Heart right ventricle (tissue), 16 donors: ENCODE measurements at regions of chr1 and their contacts with region 1.

Region 1: GRCh38 chr1:169809370-169810095 is 14.8 kb upstream of the METTL18 start:
- DNase-seq: peak in 1 of 2 donors; percentile 33
- ATAC-seq: no peak
- H3K4me3 ChIP-seq: no peak overlapping the region
- H3K27ac ChIP-seq: no peak overlapping the region
- H3K4me1 ChIP-seq: no peaks in the 10 kb centered on the region
- H3K27me3 ChIP-seq: no peaks in the 10 kb centered on the region
- CTCF ChIP-seq: peak; percentile 30 to 76 (median 62)

Region 2: DNA sequence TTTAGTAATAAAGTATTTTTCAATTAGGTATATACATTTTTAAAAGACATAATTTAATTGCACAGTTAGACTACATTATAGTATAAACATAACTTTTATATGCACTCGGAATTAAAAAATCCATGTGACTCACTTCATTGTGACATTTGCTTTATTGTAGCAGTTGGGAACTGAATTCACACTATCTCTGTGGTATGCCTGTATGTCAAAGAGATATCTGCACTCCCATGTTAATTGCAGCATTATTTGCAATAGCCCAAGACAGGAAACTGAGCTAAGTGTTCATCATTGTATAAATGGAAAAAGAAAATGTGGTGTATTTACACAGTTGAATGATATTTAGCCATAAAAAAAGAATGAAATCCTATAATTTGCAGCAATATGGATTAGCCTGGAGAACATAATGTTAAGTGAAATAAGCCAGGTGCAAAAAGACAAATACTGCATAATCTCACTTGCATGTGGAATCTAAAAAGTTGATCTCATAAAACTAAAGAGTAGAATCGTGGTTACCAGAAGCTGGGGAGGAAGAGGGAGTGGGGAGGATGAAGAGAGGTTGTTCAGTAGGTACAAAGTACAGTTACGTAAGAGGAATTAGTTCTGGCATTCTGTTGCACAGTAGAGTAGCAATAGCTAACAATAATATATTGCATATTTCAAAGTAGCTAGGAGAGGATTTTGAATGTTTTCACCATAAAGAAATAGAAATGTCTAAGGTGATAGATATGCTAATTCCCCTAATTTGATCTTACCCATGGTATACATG is 1145.3 kb before region 1 on chr1:
- intact Hi-C with region 1: no loop called
- DNase-seq: no peak
- ATAC-seq: no peak
- H3K4me3 ChIP-seq: no peak overlapping the region
- H3K27ac ChIP-seq: no peak overlapping the region
- H3K4me1 ChIP-seq: peaks cover 0 to 6% (median 0%) of the 10 kb centered on the region in 9 donors
- H3K27me3 ChIP-seq: no peaks in the 10 kb centered on the region
- CTCF ChIP-seq: no peak

Region 3: DNA sequence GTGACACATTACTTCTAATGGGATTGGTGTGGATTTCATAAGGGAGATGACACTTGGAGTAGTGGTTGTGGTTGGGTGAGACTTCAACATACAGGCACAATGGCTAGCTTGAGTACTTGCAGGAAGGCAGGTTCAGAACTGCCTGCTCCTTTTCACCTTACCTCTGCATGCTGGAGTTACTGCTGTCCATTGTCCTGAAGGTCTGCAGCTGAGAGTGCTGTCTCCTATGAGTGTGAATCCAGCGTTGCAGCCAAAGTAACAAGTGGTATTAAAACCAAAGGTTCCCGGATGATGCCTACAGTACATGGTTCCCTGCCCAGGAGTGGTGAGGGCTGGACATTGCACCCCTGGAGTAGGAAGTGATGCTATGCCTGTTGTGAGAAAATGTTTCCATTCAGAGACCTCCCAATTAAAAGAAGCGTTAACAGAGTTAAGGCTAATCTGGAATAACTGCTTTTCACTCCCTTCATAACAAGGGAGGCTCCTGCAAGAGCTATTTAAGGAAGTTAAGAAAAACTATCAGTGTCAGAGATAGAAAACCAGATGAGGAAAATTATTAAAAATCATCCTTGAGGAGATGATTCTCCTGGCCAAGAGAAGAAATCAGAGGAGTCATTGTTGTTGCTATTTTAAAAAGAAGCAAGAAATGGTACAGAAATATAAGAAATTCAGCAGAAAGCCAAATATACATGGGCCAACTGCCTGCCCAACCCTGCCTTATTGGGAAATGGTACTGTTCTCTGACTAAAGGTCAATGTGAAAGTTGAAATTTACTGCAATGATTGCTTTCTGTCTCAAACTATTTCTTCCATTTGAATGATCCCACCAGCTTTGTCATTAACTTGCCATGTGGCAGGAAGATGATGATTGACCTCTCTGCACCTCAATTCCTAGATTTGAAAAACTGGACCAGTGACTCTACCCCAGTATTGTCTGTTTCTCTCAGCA is 213.5 kb before region 1 on chr1:
- intact Hi-C with region 1: loop called in 8 of 10 experiments (anchors 5 to 10 kb)
- DNase-seq: no peak
- ATAC-seq: peak in 2 of 8 donors; percentile 41 to 57
- H3K4me3 ChIP-seq: no peak overlapping the region
- H3K27ac ChIP-seq: no peak overlapping the region
- H3K4me1 ChIP-seq: no peaks in the 10 kb centered on the region
- H3K27me3 ChIP-seq: peaks cover 0 to 22% (median 6%) of the 10 kb centered on the region in 7 donors
- CTCF ChIP-seq: no peak

Region 4: DNA sequence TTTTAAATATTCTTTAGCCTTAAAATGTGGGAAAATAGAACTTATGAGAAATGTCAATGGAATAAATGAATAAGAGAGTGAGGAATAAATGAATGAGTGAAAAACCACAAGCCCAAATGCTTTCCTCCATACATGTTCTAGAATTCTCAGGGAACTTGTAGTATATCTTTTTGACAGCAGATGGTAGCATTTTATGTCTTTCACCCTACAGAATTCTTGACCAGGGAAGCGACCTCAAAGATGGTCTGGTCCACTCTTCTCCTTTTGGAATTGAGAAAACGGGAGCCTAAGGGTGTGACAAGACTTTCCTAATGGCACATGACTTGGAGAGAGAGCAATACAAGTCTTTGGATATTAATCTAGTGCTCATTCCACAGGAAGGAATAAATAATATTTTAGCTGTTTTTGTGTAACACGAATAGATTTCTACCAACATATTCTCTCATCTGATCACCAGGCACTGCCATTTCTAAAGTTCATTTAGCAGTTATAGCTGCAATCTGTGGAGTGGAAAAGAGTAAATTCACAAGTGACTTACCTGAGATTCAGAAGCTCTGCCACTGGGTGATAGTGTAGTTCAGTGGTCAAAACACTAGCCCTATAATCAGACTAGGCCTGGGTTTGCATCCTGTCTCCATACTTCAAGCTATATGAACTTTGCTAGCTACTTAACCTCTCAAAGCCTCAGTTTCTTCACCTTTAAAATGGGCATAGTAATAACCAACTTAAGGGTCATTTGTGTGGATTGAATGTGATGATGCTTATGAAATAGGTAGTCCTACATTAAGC is 208.2 kb before region 1 on chr1:
- intact Hi-C with region 1: loop called in 9 of 10 experiments (anchors 5 to 10 kb)
- DNase-seq: no peak
- ATAC-seq: peak in 3 of 8 donors; percentile 51 to 56 (median 53)
- H3K4me3 ChIP-seq: no peak overlapping the region
- H3K27ac ChIP-seq: no peak overlapping the region
- H3K4me1 ChIP-seq: peaks cover 0 to 36% (median 0%) of the 10 kb centered on the region in 9 donors
- H3K27me3 ChIP-seq: peaks cover 0 to 32% (median 3%) of the 10 kb centered on the region in 7 donors
- CTCF ChIP-seq: peak; percentile 8 to 69 (median 50)